ENCODE measurements at regions of chr15 and their contacts with region 1.

Region 1: GRCh38 chr15:75023181-75023871 is at the start of gene PPCDC:
- DNase-seq: peak; percentile 96 to 98 (median 97)
- H3K4me3 ChIP-seq: peak within 1 kb of the TSS; percentile 5 to 87 (median 86)
- H3K27ac ChIP-seq: peak within 1 kb of the TSS; percentile 26 to 96 (median 90)
- H3K4me1 ChIP-seq: peaks cover 17% of the 10 kb centered on the region in 2 donors
- H3K27me3 ChIP-seq: no peaks in the 10 kb centered on the region
- CTCF ChIP-seq: no peak
- POLR2A ChIP-seq: peak; percentile 67 to 89
- total RNA-seq, gene PPCDC: 19.0 to 36.4 (median 24.6) TPM

Region 2: DNA sequence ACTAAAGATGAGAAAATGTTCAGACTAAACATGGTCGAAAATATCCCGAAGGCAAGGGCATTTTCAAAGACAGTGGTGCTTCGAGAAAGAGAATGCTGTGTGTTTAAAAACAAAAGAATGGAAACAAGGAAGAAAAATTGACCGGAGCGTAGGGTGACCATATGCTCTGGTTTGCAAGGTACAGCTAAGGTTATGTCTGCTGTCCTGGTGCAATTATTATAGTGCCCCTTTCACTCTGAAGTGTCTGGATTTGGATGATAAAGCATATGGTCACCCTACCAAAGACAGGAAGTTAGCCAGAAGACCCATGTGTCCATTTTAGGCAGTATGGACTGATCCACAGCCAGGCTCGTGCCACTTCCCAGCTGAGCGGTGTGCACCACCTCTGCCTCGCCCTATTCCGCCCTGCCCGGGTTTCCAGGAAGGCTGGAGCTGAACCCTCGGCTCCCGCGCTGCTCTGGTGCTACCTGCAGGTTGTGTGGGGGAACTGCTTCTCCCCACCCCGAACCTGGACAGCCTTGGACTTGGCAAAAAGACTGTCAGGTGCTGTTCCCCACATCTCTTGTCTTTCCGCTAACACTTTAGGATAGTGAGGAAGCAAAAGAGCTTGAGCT is 284.6 kb after region 1 on chr15:
- intact Hi-C with region 1: loop called in 1 of 2 experiments (anchors 10 kb)
- DNase-seq: peak in 5 of 7 donors; percentile 41 to 54 (median 50)
- H3K4me3 ChIP-seq: no peak overlapping the region
- H3K27ac ChIP-seq: no peak overlapping the region
- H3K4me1 ChIP-seq: no peaks in the 10 kb centered on the region
- H3K27me3 ChIP-seq: no peaks in the 10 kb centered on the region
- CTCF ChIP-seq: peak in 5 of 6 experiments; percentile 15 to 48 (median 24)
- POLR2A ChIP-seq: no peak

Measured in adrenal gland (tissue), 19 donors.